Gastrocnemius medialis (tissue), 4 donors: ENCODE measurements at regions of chr4 and their contacts with region 1.

Region 1: DNA sequence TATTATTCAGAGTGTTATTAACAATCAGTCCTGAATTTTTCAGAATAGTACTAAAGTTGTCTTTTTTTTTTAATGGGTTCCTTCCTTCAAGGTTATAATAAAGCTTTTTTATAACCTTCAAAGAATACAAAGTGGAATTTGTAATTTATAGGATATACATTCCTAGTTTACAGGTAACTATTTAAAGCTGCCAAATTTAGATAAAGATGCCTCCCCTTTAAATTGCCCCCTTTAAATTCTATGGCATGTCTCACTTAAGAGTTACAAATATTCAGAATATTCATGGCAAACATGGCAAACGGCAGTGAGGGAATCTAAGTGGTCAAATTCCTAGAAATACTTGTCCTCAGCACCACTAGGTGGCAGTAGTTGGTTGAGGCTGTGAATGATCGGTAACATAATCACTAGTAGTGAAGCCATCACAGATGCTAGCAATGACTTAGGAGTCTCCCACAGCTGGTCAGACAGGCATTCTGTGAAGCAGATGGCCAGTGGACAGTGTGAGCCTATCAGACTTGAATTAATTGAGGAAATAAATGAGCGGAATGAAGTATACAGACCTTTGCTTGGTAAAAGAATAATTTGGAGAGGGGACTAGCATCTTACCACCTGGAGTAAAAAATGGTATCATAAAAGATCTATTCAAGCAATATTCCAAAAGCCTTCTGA is 86.4 kb downstream of the CBR4 start:
- DNase-seq: peak in 1 of 2 donors; percentile 25
- ATAC-seq: peak; percentile 45 to 78
- H3K4me3 ChIP-seq: no peak overlapping the region
- H3K27ac ChIP-seq: no peak overlapping the region
- H3K4me1 ChIP-seq: peaks cover 0 to 6% of the 10 kb centered on the region in 2 donors
- H3K27me3 ChIP-seq: no peaks in the 10 kb centered on the region
- CTCF ChIP-seq: peak; percentile 71 to 80 (median 73)
- POLR2A ChIP-seq: no peak

Region 2: DNA sequence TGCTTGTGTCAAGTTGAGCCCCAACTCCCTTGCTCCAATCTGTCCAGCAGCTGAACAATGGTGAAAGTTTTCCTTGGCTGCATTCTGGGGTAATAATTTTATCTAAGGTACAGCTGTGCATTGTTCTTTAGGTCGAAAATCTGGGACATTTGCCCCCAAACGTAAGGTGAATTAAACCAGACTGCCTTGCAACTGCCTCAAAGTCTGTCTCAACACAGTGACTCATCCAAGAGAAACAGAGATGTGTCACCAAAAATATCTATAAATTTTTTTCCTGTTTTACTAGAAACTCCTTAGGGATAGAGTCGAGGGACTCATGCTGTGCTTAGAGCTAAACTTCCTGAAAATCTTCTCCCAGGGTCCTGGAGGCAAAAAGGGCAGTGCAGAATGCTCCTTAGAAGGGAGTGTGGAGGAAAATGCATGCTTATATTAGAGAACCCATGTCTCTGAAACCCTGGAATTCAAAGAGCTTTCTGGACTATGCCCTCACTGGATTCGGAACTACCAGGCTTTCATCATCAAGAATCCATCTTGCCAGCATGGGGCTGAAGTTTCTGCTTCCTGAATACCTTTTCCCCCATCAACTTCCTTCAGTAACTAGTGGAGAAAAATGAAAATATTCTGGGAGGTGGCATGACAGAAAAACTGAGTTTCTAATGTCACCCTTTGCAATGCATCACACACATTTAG is 311.1 kb before region 1 on chr4:
- in situ Hi-C with region 1: no loop called
- intact Hi-C with region 1: no loop called
- DNase-seq: no peak
- ATAC-seq: no peak
- H3K4me3 ChIP-seq: no peak overlapping the region
- H3K27ac ChIP-seq: no peak overlapping the region
- H3K4me1 ChIP-seq: no peaks in the 10 kb centered on the region
- H3K27me3 ChIP-seq: no peaks in the 10 kb centered on the region
- CTCF ChIP-seq: no peak
- POLR2A ChIP-seq: no peak

Region 3: GRCh38 chr4:168631241-168632162 is 292.2 kb before region 1 on chr4:
- in situ Hi-C with region 1: no loop called
- intact Hi-C with region 1: no loop called
- DNase-seq: peak; percentile 34 to 69
- ATAC-seq: peak; percentile 75 to 77
- H3K4me3 ChIP-seq: peak overlapping the region; percentile 78 to 86 (median 79)
- H3K27ac ChIP-seq: peak overlapping the region; percentile 77 to 89 (median 82)
- H3K4me1 ChIP-seq: peaks cover 31 to 49% of the 10 kb centered on the region in 2 donors
- H3K27me3 ChIP-seq: no peaks in the 10 kb centered on the region
- CTCF ChIP-seq: peak; percentile 40 to 67 (median 52)
- POLR2A ChIP-seq: peak in 1 of 2 donors; percentile 9

Region 4: DNA sequence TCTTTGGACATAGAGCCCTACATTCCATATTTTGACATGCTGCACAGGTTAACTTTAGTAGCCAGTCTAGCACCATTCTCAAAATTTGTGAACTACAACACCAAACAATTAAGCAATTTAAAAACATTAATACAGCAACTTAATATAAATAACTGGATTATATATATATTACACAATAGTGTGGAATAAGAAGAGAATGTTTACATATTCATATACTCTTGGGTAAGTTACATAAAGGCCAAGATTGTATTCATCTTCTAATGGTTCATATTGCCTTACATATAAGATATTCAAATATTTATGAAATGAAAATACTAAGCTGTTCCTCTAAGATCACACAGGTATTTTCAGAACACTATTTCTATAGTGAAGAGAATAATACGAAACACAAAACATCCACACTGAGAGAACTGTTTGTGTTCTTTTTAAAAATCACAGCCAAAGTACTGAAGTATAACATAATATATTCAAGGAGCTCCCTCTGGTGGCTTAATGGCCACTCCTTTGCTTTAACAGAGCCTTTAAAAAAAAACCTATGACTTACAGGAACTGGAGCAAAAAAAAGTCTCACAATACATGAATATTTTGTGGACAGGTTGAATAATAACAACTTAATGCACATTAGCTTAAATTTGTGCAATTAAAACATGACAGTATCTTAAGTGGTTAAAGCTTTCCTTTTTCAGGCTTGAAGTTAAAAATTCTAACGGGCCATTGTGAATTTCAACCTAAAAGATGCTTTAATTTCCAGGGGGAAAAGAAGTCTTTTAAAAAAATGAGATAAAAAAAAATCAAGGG is 642.6 kb after region 1 on chr4:
- in situ Hi-C with region 1: no loop called
- intact Hi-C with region 1: loop called (anchors 5 kb)
- DNase-seq: no peak
- ATAC-seq: peak in 1 of 2 donors; percentile 47
- H3K4me3 ChIP-seq: no peak overlapping the region
- H3K27ac ChIP-seq: no peak overlapping the region
- H3K4me1 ChIP-seq: no peaks in the 10 kb centered on the region
- H3K27me3 ChIP-seq: no peaks in the 10 kb centered on the region
- CTCF ChIP-seq: peak in 4 of 5 experiments; percentile 16 to 64 (median 44)
- POLR2A ChIP-seq: no peak